ENCODE measurements at regions of chr7 and their contacts with region 1.

Region 1: GRCh38 chr7:49166441-49166840 is 242.1 kb downstream of the CDC14C start:
- DNase-seq: peak in 1 of 2 experiments; percentile 9
- H3K4me3 ChIP-seq: no peak overlapping the region
- H3K4me3 Mint-ChIP-seq: no peak overlapping the region
- H3K27ac Mint-ChIP-seq: no peak overlapping the region
- H3K4me1 ChIP-seq: no peaks in the 10 kb centered on the region
- H3K4me1 Mint-ChIP-seq: no peaks in the 10 kb centered on the region
- H3K27me3 ChIP-seq: no peaks in the 10 kb centered on the region
- H3K27me3 Mint-ChIP-seq: peaks cover 13% of the 10 kb centered on the region
- CTCF ChIP-seq: peak; percentile 23 to 49

Region 2: DNA sequence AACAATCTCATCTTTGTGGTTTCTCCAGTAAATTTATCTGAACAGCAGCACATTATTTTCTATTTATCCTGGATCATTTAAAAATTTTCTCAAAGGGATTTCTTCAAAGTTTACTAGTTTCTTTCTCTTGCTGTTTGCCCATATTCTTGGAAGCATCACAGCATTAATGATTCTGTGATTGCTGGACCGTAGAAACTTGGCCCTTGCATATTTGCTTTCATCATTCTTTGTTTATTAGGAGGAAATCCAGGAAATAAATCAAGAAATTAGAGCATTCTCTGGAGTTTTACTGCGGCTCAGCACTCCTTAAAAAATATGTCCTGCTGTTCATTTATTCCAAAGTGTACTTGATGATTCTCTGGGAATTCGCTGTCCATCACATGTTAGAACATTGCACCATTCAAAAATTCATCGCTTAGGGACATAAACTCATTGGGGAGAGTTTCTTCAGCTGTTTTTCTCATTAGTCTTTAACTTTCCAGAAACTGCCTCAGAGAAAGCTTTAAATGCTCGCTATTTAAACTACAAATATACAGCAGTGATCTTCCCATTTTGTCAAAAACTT is 506.1 kb before region 1 on chr7:
- CTCF ChIA-PET with region 1: no interaction called
- POLR2A ChIA-PET with region 1: no interaction called
- intact Hi-C with region 1: no loop called
- DNase-seq: no peak
- H3K4me3 ChIP-seq: no peak overlapping the region
- H3K4me3 Mint-ChIP-seq: no peak overlapping the region
- H3K27ac Mint-ChIP-seq: no peak overlapping the region
- H3K4me1 ChIP-seq: no peaks in the 10 kb centered on the region
- H3K4me1 Mint-ChIP-seq: no peaks in the 10 kb centered on the region
- H3K27me3 ChIP-seq: no peaks in the 10 kb centered on the region
- H3K27me3 Mint-ChIP-seq: no peaks in the 10 kb centered on the region
- CTCF ChIP-seq: no peak

Region 3: DNA sequence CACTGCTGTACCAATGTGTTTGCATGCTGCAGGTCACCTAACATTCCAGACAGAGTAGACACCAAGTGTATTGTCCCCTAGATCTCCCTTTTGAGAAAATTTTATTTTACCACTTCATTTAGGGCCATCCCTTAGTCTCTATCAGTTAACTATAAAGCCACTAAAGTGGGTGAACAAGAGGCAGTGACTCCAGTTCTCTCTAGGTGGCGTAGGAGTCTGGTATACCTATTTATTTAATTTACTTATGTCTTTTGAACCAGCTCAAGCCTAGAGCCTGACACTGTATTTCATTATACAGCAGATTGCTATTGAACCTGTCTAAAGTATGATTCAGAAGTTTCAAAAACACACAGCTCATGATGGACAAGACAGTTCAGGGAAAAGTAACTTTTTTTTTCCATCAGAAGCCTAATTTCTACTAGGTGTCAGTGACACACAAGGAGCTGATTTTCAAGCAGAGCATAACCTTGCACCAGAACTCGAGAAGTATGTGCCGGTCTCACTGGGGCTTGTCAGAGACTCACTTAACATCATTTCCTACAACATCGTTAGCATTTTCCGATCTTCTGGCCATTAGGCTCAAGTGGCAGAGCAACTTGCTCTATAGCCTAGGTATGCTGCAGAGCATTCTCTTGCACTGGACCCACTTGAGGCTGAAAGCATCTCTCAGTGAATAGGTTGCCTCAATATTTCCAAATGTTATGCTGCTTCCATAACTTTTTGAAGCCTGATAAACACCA is 66.7 kb before region 1 on chr7:
- CTCF ChIA-PET with region 1: no interaction called
- POLR2A ChIA-PET with region 1: no interaction called
- intact Hi-C with region 1: loop called (anchors 5 kb)
- DNase-seq: no peak
- H3K4me3 ChIP-seq: no peak overlapping the region
- H3K4me3 Mint-ChIP-seq: no peak overlapping the region
- H3K27ac Mint-ChIP-seq: no peak overlapping the region
- H3K4me1 ChIP-seq: no peaks in the 10 kb centered on the region
- H3K4me1 Mint-ChIP-seq: no peaks in the 10 kb centered on the region
- H3K27me3 ChIP-seq: no peaks in the 10 kb centered on the region
- H3K27me3 Mint-ChIP-seq: peaks cover 5% of the 10 kb centered on the region
- CTCF ChIP-seq: peak in 1 of 2 experiments; percentile 20

Measured in Caco-2 (cell line).